Sigmoid colon (tissue), 7 donors: ENCODE measurements at regions of chr1 and their contacts with region 1.

Region 1: DNA sequence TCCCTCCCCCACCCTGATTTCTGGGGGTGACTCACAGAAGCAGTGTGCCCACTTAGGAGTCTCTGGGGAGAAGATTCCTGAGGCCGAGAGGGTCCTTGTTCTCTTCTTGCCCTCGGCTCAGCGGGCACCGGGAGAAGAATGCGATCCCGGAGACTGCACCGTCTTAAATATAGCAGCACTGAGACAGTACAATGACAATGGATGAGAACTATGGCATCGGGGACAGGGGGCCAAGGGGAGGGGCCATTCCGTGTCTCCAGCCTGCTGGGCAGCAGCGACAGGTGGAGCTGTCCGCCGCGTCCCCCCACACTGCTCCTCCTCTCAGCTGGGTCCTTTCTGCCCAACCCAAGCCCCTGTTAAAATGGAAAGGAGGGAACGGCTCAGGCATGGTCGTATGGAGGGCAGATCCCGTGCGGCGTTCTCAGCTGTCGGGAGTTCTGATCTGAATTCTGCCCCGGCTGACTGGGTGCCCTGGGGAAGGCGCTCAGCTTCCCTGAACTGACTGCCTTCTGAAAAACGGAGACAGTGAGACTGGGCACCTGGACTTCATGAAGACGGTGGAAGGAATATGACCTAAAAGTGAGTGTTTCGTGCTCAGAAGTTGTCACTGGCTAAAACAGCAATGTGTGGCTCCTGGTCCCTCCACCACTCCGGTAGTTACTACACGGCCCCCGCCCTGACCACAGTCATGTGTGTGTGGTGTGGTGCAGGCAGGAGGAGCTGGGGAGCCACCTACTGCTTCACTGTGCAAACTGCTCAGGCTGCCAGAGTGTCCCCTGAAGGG is at the start of gene MYOM3:
- DNase-seq: peak; percentile 85
- H3K4me3 ChIP-seq: peak within 1 kb of the TSS in 3 of 4 donors; percentile 7 to 38 (median 32)
- H3K27ac ChIP-seq: peak within 1 kb of the TSS in 1 of 4 donors; percentile 38
- H3K4me1 ChIP-seq: peaks cover 0 to 12% (median 8%) of the 10 kb centered on the region in 4 donors
- H3K27me3 ChIP-seq: peaks cover 0 to 1% (median 0%) of the 10 kb centered on the region in 3 donors
- CTCF ChIP-seq: peak in 3 of 4 experiments; percentile 44 to 60 (median 47)
- EP300 ChIP-seq: no peak
- POLR2A ChIP-seq: no peak
- total RNA-seq, gene MYOM3: under 0.01 TPM in 2 of 4 donors, not detected in the others

Region 2: DNA sequence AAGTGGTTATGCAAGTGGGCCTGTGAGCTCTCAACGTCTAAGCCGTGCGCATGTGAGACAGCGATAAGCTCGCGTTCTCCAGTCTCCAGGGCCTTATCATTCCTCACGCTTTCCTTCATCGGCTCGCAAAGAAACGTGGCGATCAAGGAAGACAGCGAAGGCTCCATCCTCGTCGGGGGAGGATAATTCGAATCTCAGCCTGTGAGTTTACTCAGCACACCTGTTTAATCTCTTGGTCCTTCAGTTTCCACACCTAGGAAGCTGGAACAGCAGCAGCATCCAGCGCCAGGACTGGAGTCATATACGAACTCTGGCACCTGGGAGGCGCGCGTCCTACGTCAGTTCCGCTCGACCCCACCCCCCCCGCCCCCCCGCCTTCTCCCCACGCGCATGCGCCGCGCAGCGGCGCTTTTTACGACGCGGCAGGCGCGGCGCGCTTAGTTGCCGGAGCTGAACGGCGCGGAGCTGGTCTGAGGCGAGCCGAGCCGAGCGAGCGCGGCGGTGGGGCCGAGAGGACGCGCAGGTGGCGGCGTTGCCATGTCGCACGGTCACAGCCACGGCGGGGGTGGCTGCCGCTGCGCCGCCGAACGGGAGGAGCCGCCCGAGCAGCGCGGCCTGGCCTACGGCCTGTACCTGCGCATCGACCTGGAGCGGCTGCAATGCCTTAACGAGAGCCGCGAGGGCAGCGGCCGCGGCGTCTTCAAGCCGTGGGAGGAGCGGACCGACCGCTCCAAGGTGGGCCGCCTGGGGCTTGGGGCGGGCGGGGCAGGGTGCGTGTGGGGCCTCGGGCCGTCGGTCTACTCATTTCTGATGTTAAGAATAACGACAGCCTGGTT is 334.0 kb before region 1 on chr1 and contains the start of gene PITHD1:
- intact Hi-C with region 1: loop called (anchors 10 kb)
- DNase-seq: peak; percentile 94
- H3K4me3 ChIP-seq: peak within 1 kb of the TSS; percentile 60 to 100 (median 82)
- H3K27ac ChIP-seq: peak within 1 kb of the TSS; percentile 80 to 96 (median 90)
- H3K4me1 ChIP-seq: peaks cover 0 to 36% (median 24%) of the 10 kb centered on the region in 4 donors
- H3K27me3 ChIP-seq: no peaks in the 10 kb centered on the region
- CTCF ChIP-seq: no peak
- EP300 ChIP-seq: no peak
- POLR2A ChIP-seq: peak; percentile 22 to 39
- total RNA-seq, gene PITHD1: 47.9 to 78.7 (median 50.9) TPM

Region 3: DNA sequence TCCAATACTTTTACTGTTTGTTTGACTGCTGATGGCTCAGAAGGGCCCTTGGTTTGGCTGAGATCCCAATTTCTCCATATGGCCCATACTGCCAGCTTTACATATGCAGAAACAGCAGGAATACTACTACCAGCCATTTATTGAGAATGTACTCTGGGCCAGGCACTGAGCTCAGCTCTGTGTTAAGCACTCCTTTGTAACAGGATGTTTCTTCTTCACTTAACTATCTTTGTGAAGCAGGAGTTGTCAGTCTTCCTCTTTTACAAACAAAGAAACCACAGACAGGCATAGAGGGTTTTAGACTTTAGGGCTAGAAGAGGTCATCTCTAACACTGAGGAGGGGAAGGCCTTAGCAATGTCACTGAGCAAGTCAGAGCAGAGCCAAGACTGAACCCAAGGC is 295.3 kb before region 1 on chr1:
- intact Hi-C with region 1: no loop called
- DNase-seq: no peak
- H3K4me3 ChIP-seq: no peak overlapping the region
- H3K27ac ChIP-seq: no peak overlapping the region
- H3K4me1 ChIP-seq: no peaks in the 10 kb centered on the region
- H3K27me3 ChIP-seq: no peaks in the 10 kb centered on the region
- CTCF ChIP-seq: no peak
- EP300 ChIP-seq: no peak
- POLR2A ChIP-seq: no peak

Region 4: GRCh38 chr1:24341260-24341659 is 229.1 kb after region 1 on chr1:
- intact Hi-C with region 1: no loop called
- DNase-seq: no peak
- H3K4me3 ChIP-seq: no peak overlapping the region
- H3K27ac ChIP-seq: no peak overlapping the region
- H3K4me1 ChIP-seq: no peaks in the 10 kb centered on the region
- H3K27me3 ChIP-seq: no peaks in the 10 kb centered on the region
- CTCF ChIP-seq: no peak
- EP300 ChIP-seq: no peak
- POLR2A ChIP-seq: no peak